GM10248 (cell line): ENCODE measurements at regions of chr4 and their contacts with region 1.

Region 1: GRCh38 chr4:70299643-70300042 is 35.1 kb upstream of the CABS1 start:
- DNase-seq: no peak
- CTCF ChIP-seq: no peak

Region 2: DNA sequence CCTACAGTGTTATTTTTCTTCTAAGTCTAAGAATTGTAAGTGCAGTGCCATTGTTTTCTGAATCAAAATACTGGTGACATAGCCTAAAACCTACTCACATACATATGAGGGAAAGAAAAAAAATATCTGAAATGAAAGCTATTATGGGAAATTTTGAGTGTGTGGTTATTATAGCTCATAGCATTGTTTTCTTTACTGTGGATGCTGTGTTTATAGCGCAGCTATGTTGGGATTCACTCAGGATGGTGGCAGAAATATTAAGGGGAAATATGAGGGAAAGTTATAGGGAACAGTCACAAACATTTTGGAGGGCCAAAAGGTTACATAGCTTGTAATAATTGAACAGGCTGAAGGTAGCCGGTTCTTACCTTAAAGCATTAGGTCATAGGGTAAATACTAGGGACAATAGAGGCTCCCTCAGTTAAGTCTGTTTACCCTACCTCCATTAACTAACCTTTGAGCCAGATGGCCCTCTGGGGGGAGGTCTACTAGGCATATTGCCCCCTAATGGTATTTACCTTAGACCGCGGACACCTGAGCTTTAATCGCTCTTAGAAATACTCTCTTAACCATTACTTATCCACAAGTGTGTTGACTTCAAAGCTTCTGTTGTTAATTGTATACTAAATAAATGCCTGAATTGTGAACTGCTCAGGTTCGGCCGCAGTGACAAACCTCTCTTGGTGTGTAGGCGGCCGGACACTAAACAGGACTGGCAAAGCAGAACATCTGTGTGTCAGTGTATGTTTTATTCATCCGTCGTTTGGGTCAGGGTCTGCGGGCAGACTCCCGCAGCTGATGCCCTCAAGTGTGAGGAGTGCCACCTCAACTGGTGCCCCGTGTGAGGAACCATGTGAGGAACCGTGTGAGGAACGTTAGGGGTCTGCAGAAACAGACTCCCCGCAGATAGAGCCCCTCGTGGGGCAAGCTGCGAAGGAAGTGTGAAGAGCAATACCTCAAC is 517.9 kb before region 1 on chr4:
- CTCF ChIA-PET with region 1: no interaction called
- POLR2A ChIA-PET with region 1: no interaction called
- DNase-seq: no peak
- CTCF ChIP-seq: no peak

Region 3: DNA sequence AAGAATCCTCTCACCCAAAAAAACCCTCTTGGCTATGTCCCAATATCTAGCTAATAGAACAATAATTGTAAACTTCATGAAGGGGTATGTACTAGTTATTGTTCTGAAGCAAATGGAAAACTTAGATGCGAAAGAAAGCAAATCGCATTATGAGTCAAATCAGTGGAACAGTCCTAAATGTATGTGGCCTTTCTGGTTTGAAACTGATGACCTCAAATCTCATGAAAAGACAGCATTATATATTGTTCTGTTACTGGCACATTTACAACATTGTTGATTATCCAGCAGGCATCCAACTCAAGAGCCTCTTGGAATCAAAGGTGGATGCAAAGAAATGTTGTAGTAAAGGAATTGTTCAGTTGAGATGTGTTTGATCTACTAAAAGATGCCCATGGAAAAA is 22.5 kb before region 1 on chr4:
- CTCF ChIA-PET with region 1: no interaction called
- POLR2A ChIA-PET with region 1: no interaction called
- DNase-seq: no peak
- CTCF ChIP-seq: no peak

Region 4: GRCh38 chr4:70315928-70316327 is 16.3 kb after region 1 on chr4:
- CTCF ChIA-PET with region 1: interaction called, 13 read pairs
- POLR2A ChIA-PET with region 1: no interaction called
- DNase-seq: no peak
- CTCF ChIP-seq: peak; percentile 31